Naive thymus-derived CD4-positive, alpha-beta T cell (primary cell): ENCODE measurements at regions of chr1 and their contacts with region 1.

Region 1: GRCh38 chr1:25642574-25643108 is 26.1 kb downstream of the MAN1C1 start:
- DNase-seq: peak; percentile 29 to 88 (median 84)
- ATAC-seq: peak; percentile 96
- H3K4me3 ChIP-seq: peak overlapping the region; percentile 53
- H3K4me3 Mint-ChIP-seq: peak overlapping the region; percentile 43 to 89 (median 72)
- H3K27ac ChIP-seq: peak overlapping the region; percentile 77
- H3K27ac Mint-ChIP-seq: peak overlapping the region; percentile 81 to 96 (median 92)
- H3K4me1 ChIP-seq: peaks cover 20 to 65% of the 10 kb centered on the region in 2 donors
- H3K4me1 Mint-ChIP-seq: peaks cover 54 to 96% (median 92%) of the 10 kb centered on the region in 7 donors
- H3K27me3 ChIP-seq: no peaks in the 10 kb centered on the region
- H3K27me3 Mint-ChIP-seq: peaks cover 0 to 85% (median 0%) of the 10 kb centered on the region in 5 donors

Region 2: GRCh38 chr1:25624156-25624555 is 18.5 kb before region 1 on chr1:
- CTCF ChIA-PET with region 1: interaction called, 35 read pairs
- POLR2A ChIA-PET with region 1: interaction called, 125 read pairs
- intact Hi-C with region 1: loop called (anchors 1 kb)
- DNase-seq: peak in 5 of 9 donors; percentile 43 to 54 (median 51)
- ATAC-seq: peak; percentile 18
- H3K4me3 ChIP-seq: peak overlapping the region; percentile 12
- H3K4me3 Mint-ChIP-seq: peak overlapping the region; percentile 77 to 100 (median 98)
- H3K27ac ChIP-seq: peak overlapping the region; percentile 51
- H3K27ac Mint-ChIP-seq: peak overlapping the region; percentile 47 to 98 (median 92)
- H3K4me1 ChIP-seq: peaks cover 23 to 48% of the 10 kb centered on the region in 2 donors
- H3K4me1 Mint-ChIP-seq: peaks cover 66 to 98% (median 87%) of the 10 kb centered on the region in 7 donors
- H3K27me3 ChIP-seq: no peaks in the 10 kb centered on the region
- H3K27me3 Mint-ChIP-seq: peaks cover 0 to 82% (median 0%) of the 10 kb centered on the region in 5 donors

Region 3: GRCh38 chr1:25631750-25632485 is 10.7 kb before region 1 on chr1:
- CTCF ChIA-PET with region 1: interaction called, 19 read pairs
- POLR2A ChIA-PET with region 1: interaction called, 38 read pairs
- intact Hi-C with region 1: loop called (anchors 1 kb)
- DNase-seq: peak in 4 of 9 donors; percentile 3 to 35 (median 25)
- ATAC-seq: peak; percentile 44
- H3K4me3 ChIP-seq: peak overlapping the region; percentile 51
- H3K4me3 Mint-ChIP-seq: peak overlapping the region; percentile 63 to 96 (median 84)
- H3K27ac ChIP-seq: peak overlapping the region; percentile 86
- H3K27ac Mint-ChIP-seq: peak overlapping the region; percentile 79 to 100 (median 97)
- H3K4me1 ChIP-seq: peaks cover 6 to 48% of the 10 kb centered on the region in 2 donors
- H3K4me1 Mint-ChIP-seq: peaks cover 55 to 91% (median 82%) of the 10 kb centered on the region in 7 donors
- H3K27me3 ChIP-seq: no peaks in the 10 kb centered on the region
- H3K27me3 Mint-ChIP-seq: peaks cover 0 to 44% (median 0%) of the 10 kb centered on the region in 5 donors

Region 4: GRCh38 chr1:25658791-25659431 is 16.3 kb after region 1 on chr1:
- CTCF ChIA-PET with region 1: no interaction called
- POLR2A ChIA-PET with region 1: interaction called, 12 read pairs
- intact Hi-C with region 1: no loop called
- DNase-seq: no peak
- ATAC-seq: no peak
- H3K4me3 ChIP-seq: no peak overlapping the region
- H3K4me3 Mint-ChIP-seq: peak overlapping the region in 2 of 10 donors; percentile 15 to 44
- H3K27ac ChIP-seq: no peak overlapping the region
- H3K27ac Mint-ChIP-seq: peak overlapping the region; percentile 29 to 81 (median 75)
- H3K4me1 ChIP-seq: peaks cover 0 to 24% of the 10 kb centered on the region in 2 donors
- H3K4me1 Mint-ChIP-seq: peaks cover 8 to 88% (median 81%) of the 10 kb centered on the region in 7 donors
- H3K27me3 ChIP-seq: no peaks in the 10 kb centered on the region
- H3K27me3 Mint-ChIP-seq: peaks cover 0 to 54% (median 0%) of the 10 kb centered on the region in 5 donors